AG04450 (cell line): ENCODE measurements at regions of chr14 and their contacts with region 1.

Region 1: DNA sequence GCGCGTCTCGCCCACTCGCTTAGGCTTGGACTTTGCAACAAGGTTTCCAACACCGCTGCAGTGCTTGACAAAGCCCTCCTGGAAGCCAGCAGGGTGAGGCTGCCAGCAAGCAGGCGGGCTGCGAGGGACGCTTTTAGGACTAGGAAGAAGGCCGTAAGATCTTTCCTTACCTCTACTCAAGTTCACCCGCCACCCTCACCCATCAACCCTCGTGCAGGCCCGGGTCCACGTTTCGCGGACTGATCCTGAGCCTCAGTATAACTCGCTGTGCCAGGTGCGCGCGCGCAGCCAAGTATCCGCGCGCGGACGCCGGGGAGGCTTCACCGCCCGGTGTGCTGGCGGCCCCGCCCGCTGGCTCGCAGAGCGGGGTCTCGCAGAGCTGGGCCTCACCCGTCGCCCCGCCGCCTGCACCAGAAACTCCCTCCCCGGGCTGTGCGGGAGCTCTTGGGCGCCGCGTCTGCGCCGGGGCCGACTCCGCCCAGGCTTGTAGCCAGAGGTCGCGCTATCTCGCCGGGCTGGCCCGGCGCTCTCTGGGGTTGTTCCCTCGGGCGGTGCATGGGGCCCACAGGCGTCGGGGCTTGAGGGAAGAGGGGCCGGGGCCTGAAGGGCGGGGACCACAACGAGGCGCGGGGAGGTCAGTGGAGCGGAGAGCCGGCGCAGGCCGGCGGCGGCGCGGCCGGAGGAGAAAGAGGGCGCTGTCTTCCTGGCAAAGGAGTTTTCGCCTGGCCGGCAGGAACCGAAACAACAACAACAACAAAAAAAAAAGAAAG is 7.6 kb upstream of the SIX1 start:
- DNase-seq: no peak
- H3K4me3 ChIP-seq: peak overlapping the region; percentile 71
- H3K27ac ChIP-seq: peak overlapping the region; percentile 95
- H3K27me3 ChIP-seq: peaks cover 15% of the 10 kb centered on the region
- CTCF ChIP-seq: peak; percentile 52

Region 2: DNA sequence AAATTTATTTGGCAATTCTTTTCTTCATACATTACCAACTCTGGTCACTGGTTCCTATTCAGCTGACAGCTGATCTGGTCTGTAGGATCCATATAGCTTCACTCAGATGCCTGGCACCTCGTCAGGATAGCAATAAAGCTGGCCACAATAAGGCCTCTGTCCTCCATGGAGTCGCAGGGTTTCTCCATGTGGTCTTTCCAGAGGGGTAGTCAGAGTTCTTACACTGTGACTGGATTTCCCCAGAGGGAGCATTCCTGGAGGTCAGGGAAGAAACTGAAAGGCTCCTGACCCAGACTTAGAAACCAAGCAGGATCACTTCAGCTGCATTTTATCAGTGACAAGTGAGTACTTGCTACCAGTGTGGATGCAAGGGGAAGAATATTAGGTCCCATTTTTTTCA is 27.3 kb after region 1 on chr14:
- CTCF ChIA-PET with region 1: no interaction called
- POLR2A ChIA-PET with region 1: no interaction called
- DNase-seq: no peak
- H3K4me3 ChIP-seq: no peak overlapping the region
- H3K27ac ChIP-seq: no peak overlapping the region
- H3K27me3 ChIP-seq: no peaks in the 10 kb centered on the region
- CTCF ChIP-seq: no peak

Region 3: GRCh38 chr14:60724137-60724619 is 67.3 kb after region 1 on chr14 and contains the start of gene SIX4:
- CTCF ChIA-PET with region 1: no interaction called
- POLR2A ChIA-PET with region 1: interaction called, 12 read pairs
- DNase-seq: peak; percentile 79
- H3K4me3 ChIP-seq: peak within 1 kb of the TSS; percentile 92
- H3K27ac ChIP-seq: peak within 1 kb of the TSS; percentile 92
- H3K27me3 ChIP-seq: no peaks in the 10 kb centered on the region
- CTCF ChIP-seq: no peak
- polyA plus RNA-seq, gene SIX4: 17.7 and 21.8 TPM in 2 replicates